ENCODE measurements at regions of chr16 and their contacts with region 1.

Region 1: GRCh38 chr16:12965946-12966345 is 64.5 kb downstream of the SHISA9 start:
- DNase-seq: no peak
- ATAC-seq: no peak
- H3K4me3 ChIP-seq: no peak overlapping the region
- H3K27ac ChIP-seq: no peak overlapping the region
- H3K4me1 ChIP-seq: no peaks in the 10 kb centered on the region
- H3K27me3 ChIP-seq: no peaks in the 10 kb centered on the region
- CTCF ChIP-seq: no peak
- POLR2A ChIP-seq: no peak

Region 2: GRCh38 chr16:12925026-12925800 is 40.7 kb before region 1 on chr16:
- in situ Hi-C with region 1: no loop called
- intact Hi-C with region 1: loop called (anchors 2 kb)
- DNase-seq: no peak
- ATAC-seq: no peak
- H3K4me3 ChIP-seq: no peak overlapping the region
- H3K27ac ChIP-seq: no peak overlapping the region
- H3K4me1 ChIP-seq: no peaks in the 10 kb centered on the region
- H3K27me3 ChIP-seq: no peaks in the 10 kb centered on the region
- CTCF ChIP-seq: no peak
- POLR2A ChIP-seq: no peak

Measured in gastrocnemius medialis (tissue), 4 donors.